CD8-positive, alpha-beta T cell (primary cell): ENCODE measurements at regions of chr1 and their contacts with region 1.

Region 1: DNA sequence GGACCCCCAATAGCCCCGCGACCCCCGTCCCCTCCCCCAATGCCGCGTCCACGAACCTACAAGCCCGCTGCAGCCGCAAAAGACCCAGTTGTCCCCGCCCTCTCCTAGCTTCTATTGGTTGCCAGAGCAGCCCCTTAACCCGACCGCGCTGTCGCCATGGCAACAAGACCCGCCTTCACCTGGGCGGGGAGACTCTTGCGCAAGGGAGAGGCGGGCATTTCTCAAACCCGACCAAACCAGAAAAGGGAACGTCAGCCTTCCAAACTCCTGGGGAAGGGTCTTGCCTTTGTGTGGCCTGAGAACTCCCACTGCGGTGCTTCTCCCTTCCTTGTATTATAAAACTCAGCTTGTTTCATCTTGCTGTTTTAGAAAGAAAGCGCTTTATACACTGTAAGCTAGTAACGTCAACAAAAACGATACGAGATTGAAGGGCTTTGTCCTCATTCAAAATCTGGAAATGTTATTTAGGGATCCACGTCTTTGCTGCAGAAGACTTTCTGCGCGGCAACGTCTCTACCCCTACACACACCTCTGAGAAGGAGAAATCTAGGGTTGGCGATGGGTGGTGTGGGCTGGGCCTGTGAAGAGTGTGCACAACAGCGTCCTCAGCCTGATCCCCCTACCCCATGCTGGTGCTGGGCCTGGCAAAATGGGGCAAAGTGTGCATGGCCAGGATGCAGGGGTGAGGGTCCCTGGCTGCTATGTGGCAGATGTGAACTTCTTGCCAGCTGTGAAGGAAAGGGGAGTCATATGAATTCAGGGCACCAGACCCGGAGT is at the start of gene TMEM9:
- DNase-seq: peak; percentile 97 to 100 (median 99)
- ATAC-seq: peak; percentile 97
- H3K4me3 ChIP-seq: peak within 1 kb of the TSS; percentile 71 to 78
- H3K4me3 Mint-ChIP-seq: peak within 1 kb of the TSS; percentile 85
- H3K27ac ChIP-seq: peak within 1 kb of the TSS; percentile 50 to 51
- H3K27ac Mint-ChIP-seq: peak within 1 kb of the TSS; percentile 78
- H3K4me1 ChIP-seq: peaks cover 16% of the 10 kb centered on the region
- H3K4me1 Mint-ChIP-seq: peaks cover 26% of the 10 kb centered on the region
- H3K27me3 ChIP-seq: no peaks in the 10 kb centered on the region
- H3K27me3 Mint-ChIP-seq: no peaks in the 10 kb centered on the region
- CTCF ChIP-seq: no peak
- total RNA-seq, gene TMEM9: 14.3 to 14.4 TPM

Region 2: GRCh38 chr1:200669314-200670241 is 485.0 kb before region 1 on chr1 and contains the start of gene DDX59:
- CTCF ChIA-PET with region 1: no interaction called
- POLR2A ChIA-PET with region 1: no interaction called
- intact Hi-C with region 1: loop called (anchors 1 to 10 kb)
- DNase-seq: peak; percentile 67 to 93 (median 89)
- ATAC-seq: peak; percentile 89
- H3K4me3 ChIP-seq: peak within 1 kb of the TSS; percentile 82 to 94
- H3K4me3 Mint-ChIP-seq: peak within 1 kb of the TSS; percentile 94
- H3K27ac ChIP-seq: peak within 1 kb of the TSS; percentile 95 to 98
- H3K27ac Mint-ChIP-seq: peak within 1 kb of the TSS; percentile 94
- H3K4me1 ChIP-seq: peaks cover 21% of the 10 kb centered on the region
- H3K4me1 Mint-ChIP-seq: peaks cover 42% of the 10 kb centered on the region
- H3K27me3 ChIP-seq: no peaks in the 10 kb centered on the region
- H3K27me3 Mint-ChIP-seq: no peaks in the 10 kb centered on the region
- CTCF ChIP-seq: no peak
- total RNA-seq, gene DDX59: 24.0 to 32.9 TPM

Region 3: DNA sequence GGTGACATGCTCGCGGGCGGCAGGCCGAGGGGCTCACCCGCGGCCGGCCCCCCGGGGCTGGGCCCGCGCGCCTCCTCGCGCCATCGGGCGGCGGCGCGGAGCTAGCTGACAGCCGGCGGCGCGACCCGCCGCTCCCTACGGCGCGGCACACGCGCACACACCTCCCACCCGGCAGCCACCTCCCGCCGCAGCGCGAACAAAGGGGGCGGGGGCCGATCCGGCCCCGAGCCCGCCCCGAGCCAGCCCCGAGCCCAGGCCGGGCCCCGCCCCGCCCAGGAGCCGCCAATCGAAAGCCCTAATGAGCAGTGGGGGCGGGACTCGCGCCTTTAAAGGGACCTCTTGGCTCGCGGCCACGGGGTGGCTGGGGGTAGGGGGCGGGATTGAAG is 131.1 kb before region 1 on chr1 and contains the start of gene KIF21B:
- CTCF ChIA-PET with region 1: no interaction called
- POLR2A ChIA-PET with region 1: interaction called, 3 read pairs
- intact Hi-C with region 1: loop called (anchors 1 kb)
- DNase-seq: peak; percentile 87 to 95 (median 91)
- ATAC-seq: peak; percentile 80
- H3K4me3 ChIP-seq: peak within 1 kb of the TSS; percentile 64 to 73
- H3K4me3 Mint-ChIP-seq: peak within 1 kb of the TSS; percentile 94
- H3K27ac ChIP-seq: peak within 1 kb of the TSS; percentile 62 to 73
- H3K27ac Mint-ChIP-seq: peak within 1 kb of the TSS; percentile 99
- H3K4me1 ChIP-seq: peaks cover 56% of the 10 kb centered on the region
- H3K4me1 Mint-ChIP-seq: peaks cover 71% of the 10 kb centered on the region
- H3K27me3 ChIP-seq: no peaks in the 10 kb centered on the region
- H3K27me3 Mint-ChIP-seq: no peaks in the 10 kb centered on the region
- CTCF ChIP-seq: no peak
- total RNA-seq, gene KIF21B: 62.2 to 63.5 TPM

Region 4: DNA sequence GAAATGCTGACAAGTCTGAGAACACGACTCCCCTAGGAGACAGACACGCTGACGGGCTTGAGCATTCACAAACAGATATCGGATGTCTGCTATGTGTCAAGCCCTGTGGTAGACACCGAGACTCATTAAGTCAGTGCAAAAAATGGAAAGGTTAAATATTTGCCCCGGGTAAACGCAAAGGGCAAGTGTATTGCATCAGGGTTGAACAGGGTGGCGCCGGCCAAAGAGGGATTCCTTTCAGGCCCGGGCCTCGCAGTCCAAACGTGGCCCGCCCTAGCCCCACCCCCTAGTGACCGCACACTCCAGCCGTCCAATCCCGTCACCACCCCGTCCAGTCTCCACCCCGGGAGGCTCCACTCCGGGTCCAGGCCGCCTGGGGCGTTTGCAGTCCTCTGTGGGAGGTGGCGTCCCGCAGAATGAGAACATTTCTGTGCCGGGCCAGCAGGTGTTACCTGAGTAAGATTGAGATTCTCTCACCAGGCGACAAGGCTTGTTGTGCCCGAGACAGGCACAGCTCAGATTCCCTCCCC is 16.0 kb after region 1 on chr1:
- CTCF ChIA-PET with region 1: interaction called, 3 read pairs
- POLR2A ChIA-PET with region 1: interaction called, 8 read pairs
- intact Hi-C with region 1: loop called (anchors 1 to 2 kb)
- DNase-seq: peak; percentile 46 to 84 (median 71)
- ATAC-seq: peak; percentile 77
- H3K4me3 ChIP-seq: peak overlapping the region; percentile 63 to 65
- H3K4me3 Mint-ChIP-seq: peak overlapping the region; percentile 91
- H3K27ac ChIP-seq: peak overlapping the region; percentile 23 to 36
- H3K27ac Mint-ChIP-seq: peak overlapping the region; percentile 84
- H3K4me1 ChIP-seq: peaks cover 11% of the 10 kb centered on the region
- H3K4me1 Mint-ChIP-seq: peaks cover 13% of the 10 kb centered on the region
- H3K27me3 ChIP-seq: no peaks in the 10 kb centered on the region
- H3K27me3 Mint-ChIP-seq: peaks cover 15% of the 10 kb centered on the region
- CTCF ChIP-seq: no peak